CD8-positive, alpha-beta memory T cell (primary cell): ENCODE measurements at regions of chr18 and their contacts with region 1.

Region 1: GRCh38 chr18:35143622-35144596 is 96.9 kb upstream of the ZNF397 start:
- DNase-seq: peak in 3 of 5 donors; percentile 8 to 38 (median 19)
- H3K4me3 ChIP-seq: no peak overlapping the region
- H3K4me3 Mint-ChIP-seq: no peak overlapping the region
- H3K27ac ChIP-seq: no peak overlapping the region
- H3K27ac Mint-ChIP-seq: peak overlapping the region in 4 of 8 donors; percentile 34 to 73 (median 53)
- H3K4me1 ChIP-seq: no peaks in the 10 kb centered on the region
- H3K4me1 Mint-ChIP-seq: peaks cover 0 to 2% (median 0%) of the 10 kb centered on the region in 3 donors
- H3K27me3 ChIP-seq: no peaks in the 10 kb centered on the region
- H3K27me3 Mint-ChIP-seq: peaks cover 0 to under 1% of the 10 kb centered on the region in 2 donors

Region 2: DNA sequence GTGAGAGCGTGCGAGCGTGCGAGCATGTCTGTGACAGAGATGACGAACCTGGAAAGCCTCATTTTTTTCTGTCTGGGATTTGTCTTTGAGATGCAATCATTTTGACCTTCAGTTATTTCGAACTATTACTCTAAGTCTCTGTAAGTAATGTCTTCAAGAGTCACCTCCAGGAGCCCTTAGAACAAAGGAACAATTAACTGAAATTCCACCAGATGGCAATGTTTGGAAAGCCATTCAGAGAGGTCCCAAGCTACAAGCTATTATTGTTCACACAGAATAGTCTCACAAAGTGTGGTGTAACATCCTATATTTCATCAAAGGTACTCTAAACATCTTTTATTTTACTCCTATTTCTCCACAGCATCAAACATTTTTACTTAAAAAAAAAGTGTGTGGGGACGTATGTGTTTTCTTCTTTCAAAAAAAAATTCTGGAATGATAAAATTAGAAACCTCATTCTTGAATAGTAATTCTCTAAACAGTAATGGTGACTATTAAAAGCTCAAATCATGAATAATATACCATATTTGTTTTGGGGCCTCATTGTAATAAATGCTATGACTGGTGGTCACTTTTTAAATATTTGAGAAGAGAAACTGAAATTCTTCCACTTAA is 137.8 kb before region 1 on chr18:
- CTCF ChIA-PET with region 1: interaction called, 10 read pairs
- POLR2A ChIA-PET with region 1: no interaction called
- DNase-seq: peak in 2 of 5 donors; percentile 41 to 53
- H3K4me3 ChIP-seq: no peak overlapping the region
- H3K4me3 Mint-ChIP-seq: no peak overlapping the region
- H3K27ac ChIP-seq: no peak overlapping the region
- H3K27ac Mint-ChIP-seq: no peak overlapping the region
- H3K4me1 ChIP-seq: no peaks in the 10 kb centered on the region
- H3K4me1 Mint-ChIP-seq: no peaks in the 10 kb centered on the region
- H3K27me3 ChIP-seq: no peaks in the 10 kb centered on the region
- H3K27me3 Mint-ChIP-seq: no peaks in the 10 kb centered on the region

Region 3: DNA sequence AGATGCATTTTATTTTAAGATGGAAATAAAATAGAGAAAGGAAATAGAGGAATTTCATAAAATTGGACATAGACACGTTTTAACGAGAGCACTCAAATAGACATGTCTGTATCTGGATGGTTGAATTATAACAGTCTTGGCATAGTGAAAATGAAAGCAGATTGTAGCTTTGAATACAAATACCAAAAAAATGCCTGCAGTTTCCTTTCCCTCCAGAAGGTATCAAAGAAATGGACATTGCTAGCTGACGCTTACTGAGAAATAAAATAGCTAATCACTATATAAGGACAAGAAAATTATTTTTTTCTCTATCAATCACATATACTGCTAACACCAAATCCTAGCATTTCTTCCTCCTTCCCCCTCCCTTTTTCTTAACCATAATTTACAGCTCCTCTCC is 114.1 kb before region 1 on chr18:
- CTCF ChIA-PET with region 1: interaction called, 54 read pairs
- POLR2A ChIA-PET with region 1: interaction called, 3 read pairs
- DNase-seq: peak in 2 of 5 donors; percentile 54 to 56
- H3K4me3 ChIP-seq: peak overlapping the region; percentile 65
- H3K4me3 Mint-ChIP-seq: peak overlapping the region; percentile 82 to 94 (median 86)
- H3K27ac ChIP-seq: peak overlapping the region; percentile 91
- H3K27ac Mint-ChIP-seq: peak overlapping the region; percentile 86 to 100 (median 98)
- H3K4me1 ChIP-seq: peaks cover 57% of the 10 kb centered on the region
- H3K4me1 Mint-ChIP-seq: peaks cover 44 to 56% (median 54%) of the 10 kb centered on the region in 3 donors
- H3K27me3 ChIP-seq: no peaks in the 10 kb centered on the region
- H3K27me3 Mint-ChIP-seq: no peaks in the 10 kb centered on the region

Region 4: GRCh38 chr18:35040988-35041814 is 102.7 kb before region 1 on chr18 and contains the start of gene MAPRE2:
- CTCF ChIA-PET with region 1: interaction called, 11 read pairs
- POLR2A ChIA-PET with region 1: no interaction called
- DNase-seq: peak; percentile 99 to 100 (median 100)
- H3K4me3 ChIP-seq: peak within 1 kb of the TSS; percentile 98
- H3K4me3 Mint-ChIP-seq: peak within 1 kb of the TSS; percentile 93 to 99 (median 97)
- H3K27ac ChIP-seq: peak within 1 kb of the TSS; percentile 98
- H3K27ac Mint-ChIP-seq: peak within 1 kb of the TSS; percentile 94 to 99 (median 97)
- H3K4me1 ChIP-seq: peaks cover 44% of the 10 kb centered on the region
- H3K4me1 Mint-ChIP-seq: peaks cover 50 to 70% (median 56%) of the 10 kb centered on the region in 3 donors
- H3K27me3 ChIP-seq: no peaks in the 10 kb centered on the region
- H3K27me3 Mint-ChIP-seq: peaks cover 0 to 4% of the 10 kb centered on the region in 2 donors
- total RNA-seq, gene MAPRE2: 38.5 to 38.6 TPM